ENCODE measurements at regions of chr2 and their contacts with region 1.

Region 1: GRCh38 chr2:25878361-25879132 is at the start of gene ASXL2:
- DNase-seq: peak; percentile 96 to 97
- ATAC-seq: peak; percentile 90 to 92
- H3K4me3 ChIP-seq: peak within 1 kb of the TSS; percentile 87 to 99 (median 92)
- H3K27ac ChIP-seq: peak within 1 kb of the TSS; percentile 95 to 99 (median 97)
- H3K4me1 ChIP-seq: peaks cover 20 to 26% of the 10 kb centered on the region in 2 donors
- H3K27me3 ChIP-seq: no peaks in the 10 kb centered on the region
- CTCF ChIP-seq: peak in 1 of 5 experiments; percentile 16
- POLR2A ChIP-seq: peak; percentile 60 to 61
- total RNA-seq, gene ASXL2: 12.5 to 24.5 (median 21.0) TPM

Region 2: DNA sequence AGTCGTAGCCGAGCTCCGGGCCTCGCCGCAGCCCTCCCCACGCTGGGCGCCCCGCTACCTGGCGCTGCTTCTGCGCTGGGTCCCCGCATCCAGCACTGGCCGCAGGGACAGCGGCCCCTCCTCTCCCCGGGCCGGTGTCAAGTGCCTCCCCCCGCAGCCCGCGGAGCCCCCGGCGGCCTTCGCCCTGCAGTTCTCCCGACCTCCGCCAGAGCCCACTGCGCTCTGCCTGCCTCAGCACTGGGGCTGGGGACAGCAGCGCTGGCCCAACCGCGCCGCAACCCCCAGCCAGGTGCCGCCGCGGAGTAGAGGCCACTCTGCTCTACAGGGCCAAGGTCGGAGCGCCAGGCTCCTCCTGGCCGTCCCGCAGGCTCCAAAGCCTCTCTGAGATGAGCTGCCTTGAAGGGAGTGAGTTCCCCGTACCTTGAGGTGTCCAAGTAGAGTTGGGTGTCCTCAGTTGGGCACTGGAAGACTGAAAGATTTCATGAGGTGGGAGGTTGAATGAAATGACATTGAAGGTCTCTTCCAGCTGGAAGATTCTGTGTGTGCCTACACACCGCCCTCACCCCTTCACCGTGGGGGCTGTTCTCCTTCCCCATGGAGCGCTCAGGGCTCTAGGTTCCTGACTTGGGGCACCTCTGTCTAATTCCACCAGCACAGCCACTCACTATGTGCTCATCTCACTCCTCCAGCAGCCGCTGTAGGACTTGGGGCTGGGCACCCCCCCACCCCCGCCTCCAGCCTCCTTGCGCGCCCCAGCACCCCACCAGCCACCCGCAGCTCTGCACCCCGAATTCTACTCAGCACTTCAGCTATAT is 536.0 kb before region 1 on chr2:
- in situ Hi-C with region 1: no loop called
- intact Hi-C with region 1: no loop called
- DNase-seq: peak; percentile 76 to 86
- ATAC-seq: peak; percentile 51 to 67
- H3K4me3 ChIP-seq: peak overlapping the region; percentile 47 to 72 (median 68)
- H3K27ac ChIP-seq: peak overlapping the region; percentile 83 to 90 (median 86)
- H3K4me1 ChIP-seq: peaks cover 24 to 32% of the 10 kb centered on the region in 2 donors
- H3K27me3 ChIP-seq: no peaks in the 10 kb centered on the region
- CTCF ChIP-seq: peak; percentile 98 to 100 (median 99)
- POLR2A ChIP-seq: peak; percentile 82 to 87

Region 3: GRCh38 chr2:25673300-25674076 is 205.1 kb before region 1 on chr2 and contains the start of gene DTNB:
- in situ Hi-C with region 1: no loop called
- intact Hi-C with region 1: loop called (anchors 5 kb)
- DNase-seq: peak; percentile 39 to 69
- ATAC-seq: peak; percentile 72 to 77
- H3K4me3 ChIP-seq: peak within 1 kb of the TSS; percentile 65 to 89 (median 72)
- H3K27ac ChIP-seq: peak within 1 kb of the TSS; percentile 68 to 81 (median 72)
- H3K4me1 ChIP-seq: peaks cover 5 to 7% of the 10 kb centered on the region in 2 donors
- H3K27me3 ChIP-seq: no peaks in the 10 kb centered on the region
- CTCF ChIP-seq: no peak
- POLR2A ChIP-seq: peak; percentile 31 to 44
- total RNA-seq, gene DTNB: 1.0 to 6.6 (median 4.1) TPM

Region 4: DNA sequence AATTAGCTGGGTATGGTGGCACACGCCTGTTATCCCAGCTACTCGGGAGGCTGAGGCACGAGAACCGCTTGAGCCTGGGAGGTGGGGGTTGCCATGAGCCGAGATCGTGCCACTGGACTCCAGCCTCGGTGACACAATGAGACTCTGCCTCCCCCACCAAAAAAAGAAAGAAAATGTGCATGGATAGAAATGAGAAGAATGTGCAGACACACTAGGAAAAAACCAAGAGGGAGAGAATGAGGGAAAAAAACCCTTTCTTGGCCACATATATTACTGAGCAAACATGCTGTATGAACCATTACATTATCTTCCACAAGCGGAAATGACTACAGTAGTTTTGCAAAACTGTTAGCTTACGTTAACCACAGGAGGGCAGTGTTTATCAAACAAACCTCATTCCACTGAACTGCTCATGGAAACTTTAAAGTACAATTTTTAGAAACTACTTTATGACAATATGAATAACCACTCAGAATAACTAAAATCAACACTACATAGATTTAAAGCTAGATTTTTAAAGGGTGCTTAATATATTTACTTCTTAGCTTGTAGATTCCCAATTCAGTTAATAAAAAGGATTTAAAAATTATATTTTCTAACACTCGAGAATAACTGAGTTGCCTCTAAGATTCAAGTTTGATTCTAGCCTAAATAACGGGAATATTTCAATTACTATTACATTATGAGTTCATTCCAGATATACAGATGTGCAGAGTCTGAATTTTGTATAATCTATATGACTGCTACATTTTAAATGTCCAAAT is 26.6 kb before region 1 on chr2:
- in situ Hi-C with region 1: no loop called
- intact Hi-C with region 1: loop called (anchors 2 kb)
- DNase-seq: no peak
- ATAC-seq: peak; percentile 75 to 93
- H3K4me3 ChIP-seq: no peak overlapping the region
- H3K27ac ChIP-seq: peak overlapping the region; percentile 38 to 44 (median 44)
- H3K4me1 ChIP-seq: peaks cover 44 to 46% of the 10 kb centered on the region in 2 donors
- H3K27me3 ChIP-seq: no peaks in the 10 kb centered on the region
- CTCF ChIP-seq: peak; percentile 53 to 76 (median 67)
- POLR2A ChIP-seq: no peak

Region 5: DNA sequence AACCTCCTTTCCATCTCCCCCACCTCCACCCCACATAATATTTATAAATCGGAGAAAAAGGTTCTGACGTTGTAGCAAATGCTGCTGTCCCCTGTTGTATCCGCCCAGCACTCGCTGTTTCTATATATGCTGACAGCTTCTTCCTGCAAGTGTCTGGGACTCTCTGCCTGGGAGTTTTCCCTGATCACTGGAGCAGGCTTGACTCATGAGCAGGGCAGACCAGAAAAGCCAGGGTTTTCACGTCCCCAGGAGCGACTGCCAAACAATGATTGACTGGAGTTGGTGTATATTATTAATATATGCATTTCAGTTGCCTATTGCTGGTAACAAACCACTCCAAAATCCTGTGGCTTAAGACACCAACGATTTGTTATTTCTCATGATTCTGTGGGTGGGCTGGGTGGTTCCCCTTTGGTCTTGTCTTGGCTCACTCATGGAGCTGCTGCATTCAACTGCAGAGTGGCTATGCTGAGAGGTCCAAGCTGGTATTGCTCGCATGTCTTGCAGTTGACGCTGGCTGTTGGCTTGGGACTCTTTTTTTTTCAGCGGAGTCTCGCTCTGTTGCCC is 20.9 kb after region 1 on chr2:
- in situ Hi-C with region 1: no loop called
- intact Hi-C with region 1: loop called (anchors 1 kb)
- DNase-seq: no peak
- ATAC-seq: no peak
- H3K4me3 ChIP-seq: no peak overlapping the region
- H3K27ac ChIP-seq: no peak overlapping the region
- H3K4me1 ChIP-seq: peaks cover 10 to 13% of the 10 kb centered on the region in 2 donors
- H3K27me3 ChIP-seq: no peaks in the 10 kb centered on the region
- CTCF ChIP-seq: no peak
- POLR2A ChIP-seq: no peak

Region 6: DNA sequence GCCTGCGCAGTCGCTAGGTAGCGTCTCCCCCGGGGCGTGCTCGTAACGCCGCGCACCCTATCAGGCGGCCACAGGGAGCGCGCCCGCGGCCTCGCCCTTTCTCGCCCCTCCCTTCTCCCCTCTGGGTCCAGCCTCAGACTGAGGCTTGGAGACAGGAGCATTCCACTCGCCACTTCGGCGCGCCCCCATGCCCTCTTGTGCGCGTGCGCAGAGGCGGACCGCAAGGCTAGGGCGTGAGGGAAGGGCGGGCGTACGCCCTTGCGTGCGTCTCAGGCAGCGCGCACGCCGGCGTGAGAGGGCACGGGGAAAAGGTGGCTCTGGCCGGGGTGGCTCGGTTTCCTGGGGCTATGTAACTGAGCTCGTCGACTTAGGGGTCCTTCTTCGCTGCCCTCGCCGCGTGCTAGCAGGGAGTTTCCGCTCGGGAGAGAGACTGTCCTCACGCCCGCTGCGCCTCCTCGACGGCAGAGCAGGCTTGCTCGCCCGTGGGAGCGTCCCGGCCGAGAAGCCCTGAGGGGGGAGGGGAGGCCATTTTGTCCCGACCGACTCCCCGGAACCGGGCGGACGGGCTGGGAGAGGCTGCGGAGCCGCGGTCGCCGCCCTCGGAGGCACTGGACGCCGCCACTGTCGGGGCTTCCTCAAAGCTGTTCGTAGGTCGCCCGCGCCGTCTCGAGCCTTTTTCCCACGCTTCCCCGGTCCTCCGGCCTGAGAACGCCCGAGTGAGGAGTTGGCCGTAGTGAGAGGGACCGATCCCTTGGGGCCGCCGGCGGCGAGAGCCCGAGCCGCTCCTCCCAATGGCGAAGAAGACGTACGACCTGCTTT is 155.5 kb after region 1 on chr2 and contains the start of gene RAB10:
- in situ Hi-C with region 1: no loop called
- intact Hi-C with region 1: loop called (anchors 10 kb)
- DNase-seq: peak; percentile 98 to 99
- ATAC-seq: peak; percentile 82 to 85
- H3K4me3 ChIP-seq: peak within 1 kb of the TSS; percentile 83 to 99 (median 92)
- H3K27ac ChIP-seq: peak within 1 kb of the TSS; percentile 99 to 100 (median 99)
- H3K4me1 ChIP-seq: peaks cover 29 to 38% of the 10 kb centered on the region in 2 donors
- H3K27me3 ChIP-seq: no peaks in the 10 kb centered on the region
- CTCF ChIP-seq: peak in 2 of 5 experiments; percentile 17 to 21
- POLR2A ChIP-seq: peak; percentile 99 to 100
- total RNA-seq, gene RAB10: 138 to 234 (median 168) TPM

Region 7: GRCh38 chr2:26184555-26185303 is 306.2 kb after region 1 on chr2:
- in situ Hi-C with region 1: no loop called
- intact Hi-C with region 1: loop called (anchors 5 kb)
- DNase-seq: peak in 1 of 2 donors; percentile 71
- ATAC-seq: peak; percentile 75 to 80
- H3K4me3 ChIP-seq: peak overlapping the region; percentile 59 to 67 (median 60)
- H3K27ac ChIP-seq: peak overlapping the region; percentile 28 to 72 (median 41)
- H3K4me1 ChIP-seq: no peaks in the 10 kb centered on the region
- H3K27me3 ChIP-seq: no peaks in the 10 kb centered on the region
- CTCF ChIP-seq: peak; percentile 42 to 73 (median 59)
- POLR2A ChIP-seq: no peak

Region 8: DNA sequence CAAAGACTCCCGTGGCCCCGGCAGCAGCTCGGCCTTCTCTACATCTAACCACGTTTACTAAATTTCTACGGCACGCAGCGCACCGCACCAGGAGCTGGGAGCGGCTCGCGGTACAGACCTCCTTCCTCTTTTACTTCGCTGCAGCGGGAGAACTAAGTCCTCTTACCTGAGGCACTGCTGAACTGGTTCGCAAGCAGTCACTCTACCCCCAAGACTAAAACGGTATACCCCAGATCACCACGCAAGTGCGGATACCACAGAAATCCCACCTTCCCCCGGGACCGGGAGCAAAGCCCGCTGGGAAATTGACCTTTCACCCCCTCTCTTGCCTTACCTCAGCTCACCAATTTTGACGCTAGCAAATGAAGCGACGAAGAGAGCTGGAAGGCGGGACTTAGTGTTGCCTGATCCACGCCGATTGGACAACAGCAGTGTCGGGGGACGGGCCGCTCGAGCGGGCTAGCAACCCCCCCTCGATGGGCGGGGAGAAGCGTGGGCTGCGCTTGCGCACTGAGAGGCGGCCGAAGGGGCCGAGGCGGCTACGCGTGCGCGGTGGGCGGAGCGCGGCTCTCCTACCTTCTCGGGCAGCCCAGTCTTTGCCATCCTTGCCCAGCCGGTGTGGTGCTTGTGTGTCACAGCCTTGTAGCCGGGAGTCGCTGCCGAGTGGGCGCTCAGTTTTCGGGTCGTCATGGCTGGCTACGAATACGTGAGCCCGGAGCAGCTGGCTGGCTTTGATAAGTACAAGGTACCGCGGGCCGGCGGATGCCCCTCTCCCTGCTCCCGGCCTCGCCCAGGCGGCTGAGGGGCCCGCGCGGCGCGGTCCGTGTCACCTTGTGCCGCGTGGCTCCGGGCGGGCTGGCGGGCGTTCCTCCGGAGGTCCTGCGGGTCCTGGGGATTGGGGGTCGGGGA is 467.3 kb after region 1 on chr2 and contains the start of gene SELENOI:
- in situ Hi-C with region 1: no loop called
- intact Hi-C with region 1: loop called (anchors 10 kb)
- DNase-seq: peak; percentile 99
- ATAC-seq: peak; percentile 99
- H3K4me3 ChIP-seq: peak within 1 kb of the TSS; percentile 87 to 95 (median 92)
- H3K27ac ChIP-seq: peak within 1 kb of the TSS; percentile 91 to 98 (median 95)
- H3K4me1 ChIP-seq: peaks cover 26 to 27% of the 10 kb centered on the region in 2 donors
- H3K27me3 ChIP-seq: no peaks in the 10 kb centered on the region
- CTCF ChIP-seq: no peak
- POLR2A ChIP-seq: peak; percentile 91 to 93
- total RNA-seq, gene SELENOI: 8.5 to 30.6 (median 17.0) TPM

Measured in gastrocnemius medialis (tissue), 4 donors.